ENCODE measurements at regions of chr2 and their contacts with region 1.

Region 1: GRCh38 chr2:168118733-168119514 is 128.5 kb downstream of the STK39 start:
- DNase-seq: peak; percentile 17
- H3K4me3 ChIP-seq: no peak overlapping the region; a peak in 1 of 4 replicates
- H3K27ac ChIP-seq: peak overlapping the region; percentile 9 to 67; a peak in 2 of 4 replicates
- H3K4me1 ChIP-seq: peaks cover 0 to 8% of the 10 kb centered on the region in 2 experiments; a peak in 2 of 4 replicates
- H3K27me3 ChIP-seq: no peaks in the 10 kb centered on the region
- CTCF ChIP-seq: peak; percentile 89
- EP300 ChIP-seq: no peak
- RAD21 ChIP-seq: peak; percentile 88

Region 2: GRCh38 chr2:167264380-167264779 is 854.5 kb before region 1 on chr2:
- CTCF ChIA-PET with region 1: interaction called, 55 read pairs
- POLR2A ChIA-PET with region 1: interaction called, 4 read pairs
- DNase-seq: peak; percentile 17
- H3K4me3 ChIP-seq: no peak overlapping the region
- H3K27ac ChIP-seq: no peak overlapping the region
- H3K4me1 ChIP-seq: no peaks in the 10 kb centered on the region
- H3K27me3 ChIP-seq: no peaks in the 10 kb centered on the region
- CTCF ChIP-seq: peak; percentile 61
- EP300 ChIP-seq: no peak
- RAD21 ChIP-seq: peak; percentile 76

Region 3: GRCh38 chr2:167670588-167670987 is 448.3 kb before region 1 on chr2:
- CTCF ChIA-PET with region 1: interaction called, 10 read pairs
- POLR2A ChIA-PET with region 1: no interaction called
- DNase-seq: no peak
- H3K4me3 ChIP-seq: no peak overlapping the region
- H3K27ac ChIP-seq: no peak overlapping the region
- H3K4me1 ChIP-seq: no peaks in the 10 kb centered on the region; a peak in 1 of 4 replicates
- H3K27me3 ChIP-seq: no peaks in the 10 kb centered on the region
- CTCF ChIP-seq: no peak
- EP300 ChIP-seq: no peak
- RAD21 ChIP-seq: no peak

Region 4: GRCh38 chr2:168015274-168015953 is 103.5 kb before region 1 on chr2:
- CTCF ChIA-PET with region 1: interaction called, 11 read pairs
- POLR2A ChIA-PET with region 1: no interaction called
- DNase-seq: peak; percentile 56
- H3K4me3 ChIP-seq: no peak overlapping the region
- H3K27ac ChIP-seq: peak overlapping the region in 1 of 2 experiments; percentile 93; a peak in 2 of 4 replicates
- H3K4me1 ChIP-seq: peaks cover 0 to 12% of the 10 kb centered on the region in 2 experiments; a peak in 2 of 4 replicates
- H3K27me3 ChIP-seq: no peaks in the 10 kb centered on the region
- CTCF ChIP-seq: no peak
- EP300 ChIP-seq: peak in 1 of 2 experiments; percentile 80; a peak in 2 of 4 replicates
- RAD21 ChIP-seq: no peak; the same call in 1 of the 2 replicates

Region 5: GRCh38 chr2:168107322-168107721 is 11.6 kb before region 1 on chr2:
- CTCF ChIA-PET with region 1: interaction called, 85 read pairs
- POLR2A ChIA-PET with region 1: no interaction called
- DNase-seq: peak; percentile 56
- H3K4me3 ChIP-seq: no peak overlapping the region
- H3K27ac ChIP-seq: peak overlapping the region; percentile 76 to 92
- H3K4me1 ChIP-seq: peaks cover 7 to 25% of the 10 kb centered on the region in 2 experiments; a peak in 2 of 4 replicates
- H3K27me3 ChIP-seq: no peaks in the 10 kb centered on the region
- CTCF ChIP-seq: no peak
- EP300 ChIP-seq: peak; percentile 97 to 100
- RAD21 ChIP-seq: peak; percentile 34; the same call in 1 of the 2 replicates

Region 6: GRCh38 chr2:168660870-168661862 is 542.2 kb after region 1 on chr2:
- CTCF ChIA-PET with region 1: no interaction called
- POLR2A ChIA-PET with region 1: no interaction called
- DNase-seq: peak; percentile 31
- H3K4me3 ChIP-seq: no peak overlapping the region
- H3K27ac ChIP-seq: no peak overlapping the region
- H3K4me1 ChIP-seq: peaks cover 2 to 6% of the 10 kb centered on the region in 2 experiments; a peak in 2 of 4 replicates
- H3K27me3 ChIP-seq: no peaks in the 10 kb centered on the region
- CTCF ChIP-seq: no peak
- EP300 ChIP-seq: no peak
- RAD21 ChIP-seq: no peak